ENCODE measurements at regions of chr3 and their contacts with region 1.

Region 1: DNA sequence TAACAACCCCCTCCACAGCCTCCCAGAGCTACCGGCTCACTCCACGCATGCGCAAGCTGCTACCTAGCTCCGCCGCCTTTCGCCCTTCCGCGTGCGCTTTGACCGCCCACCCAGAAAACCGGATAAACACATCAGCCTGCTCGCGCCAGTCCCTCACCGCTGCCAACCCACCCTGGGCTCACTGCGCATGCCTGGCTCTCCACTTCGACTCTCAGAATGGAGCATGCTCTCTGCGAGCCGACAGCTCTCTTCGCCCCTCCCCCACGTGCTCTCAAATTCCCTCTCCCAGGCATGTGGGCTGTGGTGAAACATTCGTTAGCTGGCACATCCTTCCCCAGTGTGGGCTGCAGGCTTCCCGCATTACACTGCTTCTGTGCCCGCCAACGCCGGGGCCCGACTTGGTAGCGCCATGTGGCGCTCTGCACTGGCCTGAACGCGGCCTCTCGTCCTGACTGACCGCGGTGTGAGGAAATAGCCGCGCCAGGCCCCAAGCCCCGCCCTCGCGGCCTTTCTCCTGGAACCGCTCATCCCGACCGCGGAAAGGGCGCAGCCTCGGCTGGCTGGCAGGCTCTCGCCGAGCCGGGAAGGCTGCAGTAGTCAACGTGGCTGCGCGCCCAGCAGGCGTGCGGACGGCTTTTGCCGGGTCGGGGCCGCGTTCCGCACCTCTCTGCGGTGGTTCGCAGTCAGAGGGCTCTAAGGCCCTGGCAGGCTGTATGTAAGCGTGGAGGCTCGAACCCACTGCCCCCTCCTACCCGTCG is 445 bp upstream of the MSL2 start:
- DNase-seq: peak; percentile 93 to 99 (median 96)

Region 2: GRCh38 chr3:135728007-135728721 is 468.4 kb before region 1 on chr3:
- intact Hi-C with region 1: no loop called
- DNase-seq: no peak

Region 3: DNA sequence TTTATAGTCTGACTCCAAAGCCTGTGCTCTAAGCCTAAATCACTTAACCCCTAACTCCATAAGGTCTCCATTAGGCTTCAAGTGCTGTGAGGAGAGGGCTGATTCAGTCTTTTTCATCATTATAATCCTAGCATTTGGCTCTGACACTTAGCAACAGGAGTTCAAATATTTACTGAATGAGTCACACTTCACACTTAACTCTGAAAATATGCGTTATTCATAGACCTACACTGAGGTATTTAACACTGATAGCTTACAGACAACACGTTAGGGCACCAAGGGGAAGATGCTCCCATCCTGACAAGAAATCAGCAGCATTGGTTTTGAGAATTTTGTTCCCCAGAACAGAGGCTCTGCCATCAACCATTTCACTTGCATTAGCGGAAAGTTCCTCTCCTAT is 54.0 kb before region 1 on chr3:
- intact Hi-C with region 1: loop called (anchors 10 kb)
- DNase-seq: no peak

Region 4: GRCh38 chr3:136250226-136250902 is 53.8 kb after region 1 on chr3 and contains the start of gene PCCB:
- intact Hi-C with region 1: loop called (anchors 2 kb)
- DNase-seq: peak; percentile 83 to 99 (median 90)